Common myeloid progenitor, CD34-positive (primary cell): ENCODE measurements at regions of chr14 and their contacts with region 1.

Region 1: GRCh38 chr14:21014761-21015190 is 10.1 kb downstream of the NDRG2 start:
- DNase-seq: peak; percentile 82 to 90 (median 84)
- H3K4me3 ChIP-seq: no peak overlapping the region
- H3K27ac ChIP-seq: no peak overlapping the region
- H3K4me1 ChIP-seq: peaks cover 0 to 17% (median 4%) of the 10 kb centered on the region in 4 experiments
- H3K27me3 ChIP-seq: peaks cover 0 to 3% (median 0%) of the 10 kb centered on the region in 5 experiments

Region 2: GRCh38 chr14:20836668-20837338 is 178.0 kb before region 1 on chr14:
- CTCF ChIA-PET with region 1: no interaction called
- POLR2A ChIA-PET with region 1: no interaction called
- DNase-seq: no peak
- H3K4me3 ChIP-seq: no peak overlapping the region
- H3K27ac ChIP-seq: no peak overlapping the region
- H3K4me1 ChIP-seq: no peaks in the 10 kb centered on the region
- H3K27me3 ChIP-seq: no peaks in the 10 kb centered on the region

Region 3: DNA sequence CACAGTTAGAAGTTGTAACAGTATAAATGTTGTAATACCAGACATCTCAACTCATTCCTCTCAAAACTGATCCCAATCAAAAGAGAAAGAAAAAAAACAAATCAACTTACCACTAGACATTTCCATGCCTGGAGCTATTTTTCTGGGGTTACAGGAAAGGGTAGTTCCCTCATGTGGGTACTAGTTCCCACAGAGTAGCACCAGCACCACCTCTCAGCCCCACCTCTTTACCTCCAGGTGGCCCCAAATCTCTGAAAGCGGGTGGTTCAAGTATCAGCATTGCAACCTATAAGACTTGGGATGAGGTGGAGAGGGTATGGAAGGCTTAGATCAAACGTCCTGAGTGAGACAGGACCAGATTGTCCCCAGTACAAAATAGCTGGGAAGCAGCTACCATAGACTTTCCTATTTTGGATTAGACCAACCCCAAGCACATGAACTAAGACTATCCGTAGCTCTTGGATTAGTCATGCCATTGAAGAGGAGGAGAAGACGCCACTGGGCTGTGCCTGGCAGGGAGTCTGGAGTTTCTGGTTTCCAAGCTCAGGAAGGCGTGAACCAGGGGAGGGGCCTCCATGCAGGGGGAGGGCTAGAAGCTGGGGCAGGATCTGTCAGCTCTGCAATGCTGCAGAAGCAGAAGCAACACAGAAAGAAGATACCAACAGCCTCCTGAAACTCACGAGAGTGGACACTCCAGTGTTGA is 16.0 kb before region 1 on chr14 and contains the start of gene SLC39A2:
- CTCF ChIA-PET with region 1: interaction called, 109 read pairs
- POLR2A ChIA-PET with region 1: interaction called, 3 read pairs
- DNase-seq: no peak
- H3K4me3 ChIP-seq: no peak within 1 kb of the TSS
- H3K27ac ChIP-seq: no peak within 1 kb of the TSS
- H3K4me1 ChIP-seq: no peaks in the 10 kb centered on the region
- H3K27me3 ChIP-seq: no peaks in the 10 kb centered on the region

Region 4: GRCh38 chr14:21049271-21049673 is 34.5 kb after region 1 on chr14:
- CTCF ChIA-PET with region 1: interaction called, 345 read pairs
- POLR2A ChIA-PET with region 1: no interaction called
- DNase-seq: no peak
- H3K4me3 ChIP-seq: no peak overlapping the region
- H3K27ac ChIP-seq: no peak overlapping the region
- H3K4me1 ChIP-seq: peaks cover 5 to 13% (median 11%) of the 10 kb centered on the region in 4 experiments
- H3K27me3 ChIP-seq: no peaks in the 10 kb centered on the region

Region 5: DNA sequence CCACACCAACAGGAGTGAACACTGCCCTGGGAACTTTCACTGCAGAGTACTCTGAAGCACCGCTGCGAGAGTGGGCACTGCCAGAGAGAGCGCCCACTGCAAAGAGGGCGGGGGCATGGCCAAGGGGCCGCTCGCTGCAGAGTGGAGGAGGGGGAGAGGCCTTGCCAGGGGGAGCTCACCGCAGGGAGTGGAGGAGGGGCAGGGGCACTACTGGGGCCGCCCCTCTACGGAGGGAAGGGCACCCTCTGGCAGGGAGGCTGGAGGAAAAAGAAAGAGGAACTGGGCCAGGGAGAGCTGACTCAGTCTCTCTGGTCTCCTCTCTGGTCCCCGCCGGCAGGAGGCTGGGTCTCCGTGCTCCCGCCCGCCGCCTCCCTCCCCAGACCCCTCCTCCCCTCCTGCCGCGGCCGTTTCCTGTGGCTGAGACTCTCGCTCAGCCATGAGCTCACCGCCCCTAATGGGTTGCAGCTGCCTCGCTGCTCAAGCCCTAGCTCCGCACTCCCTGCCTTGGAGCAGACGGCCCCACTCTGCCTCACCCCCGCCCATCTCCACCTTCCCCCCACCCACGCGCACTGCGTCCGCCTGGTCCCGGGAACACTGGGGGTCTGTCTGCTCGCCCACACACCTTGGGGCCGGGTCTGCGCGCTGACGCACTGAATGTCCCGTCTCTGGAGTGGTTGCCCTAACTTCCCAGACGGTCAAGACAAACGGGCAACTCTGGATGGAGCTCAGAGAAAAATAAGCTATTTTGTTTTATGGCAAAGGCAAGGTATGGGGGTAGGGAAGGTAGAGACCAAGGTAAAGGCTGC is 56.7 kb after region 1 on chr14:
- CTCF ChIA-PET with region 1: interaction called, 54 read pairs
- POLR2A ChIA-PET with region 1: no interaction called
- DNase-seq: peak; percentile 86 to 94 (median 91)
- H3K4me3 ChIP-seq: peak overlapping the region; percentile 34 to 88 (median 73)
- H3K27ac ChIP-seq: peak overlapping the region; percentile 25 to 73
- H3K4me1 ChIP-seq: peaks cover 8 to 45% (median 42%) of the 10 kb centered on the region in 4 experiments
- H3K27me3 ChIP-seq: peaks cover 0 to 15% (median 6%) of the 10 kb centered on the region in 5 experiments

Region 6: DNA sequence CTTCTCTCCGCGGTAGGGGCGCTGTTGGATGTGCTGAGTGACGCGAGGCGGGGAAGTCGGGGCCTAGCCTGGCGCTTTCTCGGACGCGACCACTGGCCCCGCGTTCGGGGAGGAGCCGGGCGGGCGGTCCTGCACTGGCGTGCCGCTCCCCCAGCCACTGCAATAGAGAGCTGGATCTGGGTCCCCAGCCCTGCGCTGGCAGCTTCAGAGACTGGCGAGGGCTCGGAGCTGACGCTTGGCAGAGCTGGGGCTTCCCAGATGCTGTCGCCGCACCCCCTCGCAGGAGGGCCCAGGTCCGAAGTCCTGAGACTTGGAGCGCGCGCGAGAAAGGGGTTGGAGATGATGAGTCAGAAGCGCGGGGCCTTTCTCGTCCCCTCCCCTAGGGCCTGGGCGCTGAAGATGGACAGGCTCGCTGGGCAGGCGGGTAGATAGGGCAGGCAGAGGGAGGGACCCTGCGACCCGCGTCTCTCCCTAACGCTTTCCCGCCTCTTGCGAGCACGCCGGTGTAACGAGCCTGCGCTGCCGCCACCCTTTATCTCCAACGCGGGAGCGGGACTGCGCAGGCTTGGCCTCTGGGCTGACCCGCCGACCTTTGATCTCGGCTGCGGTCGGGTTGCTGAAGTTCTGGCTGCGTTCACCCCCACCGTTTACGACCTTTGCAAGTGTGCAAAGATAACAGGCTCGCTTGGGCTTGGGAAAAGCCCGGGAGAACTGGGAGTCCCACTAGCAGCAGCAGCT is 89.1 kb after region 1 on chr14:
- CTCF ChIA-PET with region 1: interaction called, 126 read pairs
- POLR2A ChIA-PET with region 1: no interaction called
- DNase-seq: peak; percentile 94 to 97 (median 96)
- H3K4me3 ChIP-seq: peak overlapping the region; percentile 79 to 89 (median 85)
- H3K27ac ChIP-seq: peak overlapping the region; percentile 98 to 99
- H3K4me1 ChIP-seq: peaks cover 10 to 53% (median 39%) of the 10 kb centered on the region in 4 experiments
- H3K27me3 ChIP-seq: peaks cover 0 to 2% (median 0%) of the 10 kb centered on the region in 5 experiments